ENCODE measurements at regions of chr17 and their contacts with region 1.

Region 1: DNA sequence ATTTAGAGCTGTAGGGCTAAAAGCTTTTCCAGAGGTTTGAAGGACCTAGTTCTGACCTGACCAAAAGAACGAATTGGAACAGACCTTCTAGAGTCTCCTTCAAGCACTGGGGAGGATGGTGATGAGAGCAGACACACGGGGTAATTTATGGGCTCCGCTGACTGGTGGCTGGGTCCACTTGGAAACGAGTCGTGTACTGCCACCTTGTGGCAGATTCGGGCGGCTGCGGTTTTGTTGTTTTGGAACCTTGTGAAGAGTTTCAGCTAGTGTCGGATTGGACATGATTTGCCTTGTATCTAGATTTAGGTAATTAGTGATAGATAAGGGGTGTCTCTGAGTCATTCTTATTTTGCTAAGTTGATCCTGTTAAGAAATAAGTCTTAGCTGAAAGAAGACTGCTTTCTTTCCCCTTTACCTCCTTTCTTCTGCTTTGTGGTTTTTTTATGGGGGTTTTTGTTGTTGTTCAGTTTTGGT is 98.9 kb downstream of the AATF start:
- DNase-seq: peak; percentile 71
- ATAC-seq: peak; percentile 91
- H3K4me3 ChIP-seq: no peak overlapping the region
- H3K27ac ChIP-seq: no peak overlapping the region
- H3K4me1 ChIP-seq: 0 out of 4 replicates have a peak, but pooled peaks cover 2 to 5% of the 10 kb centered on the region in 2 experiments
- H3K27me3 ChIP-seq: no peaks in the 10 kb centered on the region
- CTCF ChIP-seq: peak; percentile 77 to 92 (median 88)
- POLR2A ChIP-seq: no peak
- RAD21 ChIP-seq: peak; percentile 95

Region 2: DNA sequence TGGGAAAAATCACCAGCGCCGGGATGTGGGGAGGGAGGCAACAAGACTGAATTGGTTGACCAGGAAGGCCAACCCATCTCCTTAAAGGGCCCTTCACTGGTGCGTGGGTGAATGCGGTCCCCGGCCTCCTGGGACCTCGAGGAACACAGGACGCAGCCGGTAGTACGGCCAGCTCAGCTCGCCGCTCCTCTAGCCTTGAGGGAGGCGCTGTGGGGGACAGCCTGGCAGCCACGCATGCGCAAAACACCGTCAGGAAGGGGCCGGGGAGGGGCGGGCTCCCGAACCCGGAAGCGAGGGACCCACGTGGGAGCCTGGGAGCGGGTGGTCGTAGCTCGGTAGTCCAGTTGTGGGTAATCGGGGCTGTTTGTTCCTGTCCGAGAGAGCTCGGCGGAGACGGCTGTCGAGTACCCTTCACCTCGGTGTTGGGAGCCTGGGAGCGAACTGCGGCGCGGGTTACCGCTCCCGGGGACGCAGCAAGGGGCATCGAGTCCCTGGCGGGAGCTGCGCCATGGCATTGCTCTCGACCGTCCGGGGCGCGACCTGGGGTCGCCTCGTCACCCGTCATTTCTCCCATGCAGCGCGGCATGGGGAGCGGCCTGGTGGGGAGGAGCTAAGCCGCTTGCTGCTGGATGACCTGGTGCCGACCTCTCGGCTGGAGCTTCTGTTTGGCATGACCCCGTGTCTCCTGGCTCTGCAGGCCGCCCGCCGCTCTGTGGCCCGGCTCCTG is 446.2 kb before region 1 on chr17 and contains the start of gene MRM1:
- CTCF ChIA-PET with region 1: interaction called, 17 read pairs
- POLR2A ChIA-PET with region 1: no interaction called
- RAD21 ChIA-PET with region 1: no interaction called
- intact Hi-C with region 1: no loop called
- DNase-seq: peak; percentile 91
- ATAC-seq: peak; percentile 88
- H3K4me3 ChIP-seq: peak within 1 kb of the TSS; percentile 91 to 98
- H3K27ac ChIP-seq: peak within 1 kb of the TSS; percentile 81
- H3K4me1 ChIP-seq: peaks cover 5 to 22% of the 10 kb centered on the region in 2 experiments; a peak in 3 of 4 replicates
- H3K27me3 ChIP-seq: no peaks in the 10 kb centered on the region
- CTCF ChIP-seq: no peak
- POLR2A ChIP-seq: peak; percentile 88
- RAD21 ChIP-seq: no peak
- total RNA-seq, gene MRM1: 14.5 TPM

Region 3: GRCh38 chr17:36705874-36706731 is 341.6 kb before region 1 on chr17:
- CTCF ChIA-PET with region 1: interaction called, 17 read pairs
- POLR2A ChIA-PET with region 1: no interaction called
- RAD21 ChIA-PET with region 1: interaction called, 4 read pairs
- intact Hi-C with region 1: loop called (anchors 2 kb)
- DNase-seq: peak; percentile 18
- ATAC-seq: peak; percentile 95
- H3K4me3 ChIP-seq: no peak overlapping the region
- H3K27ac ChIP-seq: no peak overlapping the region
- H3K4me1 ChIP-seq: no peaks in the 10 kb centered on the region
- H3K27me3 ChIP-seq: peaks cover 2% of the 10 kb centered on the region; the same call in 1 of the 2 replicates
- CTCF ChIP-seq: peak; percentile 65 to 90 (median 85); a peak in 5 of 6 replicates
- POLR2A ChIP-seq: no peak
- RAD21 ChIP-seq: peak; percentile 82

Region 4: GRCh38 chr17:36768394-36768793 is 279.3 kb before region 1 on chr17:
- CTCF ChIA-PET with region 1: interaction called, 9 read pairs
- POLR2A ChIA-PET with region 1: no interaction called
- RAD21 ChIA-PET with region 1: no interaction called
- intact Hi-C with region 1: loop called (anchors 1 kb)
- DNase-seq: no peak
- ATAC-seq: peak; percentile 49; the same call in 1 of the 2 replicates
- H3K4me3 ChIP-seq: no peak overlapping the region
- H3K27ac ChIP-seq: no peak overlapping the region
- H3K4me1 ChIP-seq: no peaks in the 10 kb centered on the region
- H3K27me3 ChIP-seq: no peaks in the 10 kb centered on the region
- CTCF ChIP-seq: peak in 2 of 3 experiments; percentile 15 to 27; a peak in 2 of 6 replicates
- POLR2A ChIP-seq: no peak
- RAD21 ChIP-seq: peak; percentile 43

Region 5: GRCh38 chr17:36892112-36892838 is 155.4 kb before region 1 on chr17:
- CTCF ChIA-PET with region 1: interaction called, 5 read pairs
- POLR2A ChIA-PET with region 1: no interaction called
- RAD21 ChIA-PET with region 1: no interaction called
- intact Hi-C with region 1: loop called (anchors 1 kb)
- DNase-seq: peak; percentile 15
- ATAC-seq: peak; percentile 69
- H3K4me3 ChIP-seq: no peak overlapping the region
- H3K27ac ChIP-seq: no peak overlapping the region
- H3K4me1 ChIP-seq: no peaks in the 10 kb centered on the region; a peak in 1 of 4 replicates
- H3K27me3 ChIP-seq: no peaks in the 10 kb centered on the region
- CTCF ChIP-seq: peak; percentile 19 to 28 (median 19); a peak in 3 of 6 replicates
- POLR2A ChIP-seq: no peak
- RAD21 ChIP-seq: peak; percentile 54

Region 6: GRCh38 chr17:37107406-37108083 is 59.9 kb after region 1 on chr17:
- CTCF ChIA-PET with region 1: no interaction called
- POLR2A ChIA-PET with region 1: no interaction called
- RAD21 ChIA-PET with region 1: no interaction called
- intact Hi-C with region 1: no loop called
- DNase-seq: no peak
- ATAC-seq: no peak
- H3K4me3 ChIP-seq: no peak overlapping the region
- H3K27ac ChIP-seq: no peak overlapping the region
- H3K4me1 ChIP-seq: no peaks in the 10 kb centered on the region
- H3K27me3 ChIP-seq: no peaks in the 10 kb centered on the region
- CTCF ChIP-seq: no peak
- POLR2A ChIP-seq: no peak
- RAD21 ChIP-seq: no peak

Measured in HCT116 (cell line).